Left ventricle myocardium superior (tissue), 1 donor: ENCODE measurements at regions of chr5 and their contacts with region 1.

Region 1: DNA sequence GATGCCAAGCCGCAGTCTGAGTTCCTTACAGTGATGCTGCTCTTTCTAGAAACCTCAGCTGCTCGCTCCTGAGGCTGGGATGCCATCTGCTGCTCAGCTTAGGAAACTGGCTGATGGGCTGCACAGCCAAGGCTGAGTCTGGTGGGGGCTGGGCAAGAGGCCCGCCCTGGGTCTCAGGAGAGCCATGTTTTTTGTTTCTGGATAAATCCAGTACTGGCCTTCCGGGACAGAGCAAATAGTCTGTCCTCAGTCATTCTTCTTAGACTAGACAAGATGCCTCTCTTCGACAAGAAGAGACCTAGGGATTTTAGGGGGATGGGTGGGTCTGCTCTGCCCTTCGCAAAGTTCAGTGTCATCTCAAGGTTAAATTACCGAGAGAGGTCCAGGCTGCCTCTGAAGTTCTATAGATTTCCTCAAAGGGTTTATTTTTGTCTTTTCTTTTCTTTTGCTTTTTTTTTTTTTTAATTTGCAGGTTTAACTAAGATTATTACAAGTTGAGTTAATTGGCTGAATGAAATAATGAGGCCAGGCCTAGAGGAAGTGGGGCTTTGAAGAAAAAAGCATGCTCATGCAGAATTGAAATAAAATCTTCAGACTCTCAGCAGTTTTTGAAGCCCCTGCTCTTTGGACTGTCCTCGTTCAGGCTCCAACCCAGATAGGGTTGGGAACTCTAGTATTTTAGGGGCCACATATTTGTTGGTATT is 30.6 kb upstream of the MATR3 start:
- DNase-seq: peak; percentile 91
- ATAC-seq: peak; percentile 99

Region 2: GRCh38 chr5:138230981-138231589 is 1031.8 kb before region 1 on chr5:
- intact Hi-C with region 1: no loop called
- DNase-seq: no peak
- ATAC-seq: peak; percentile 73

Region 3: GRCh38 chr5:138583984-138584637 is 678.8 kb before region 1 on chr5:
- intact Hi-C with region 1: loop called (anchors 5 kb)
- DNase-seq: no peak
- ATAC-seq: no peak

Region 4: DNA sequence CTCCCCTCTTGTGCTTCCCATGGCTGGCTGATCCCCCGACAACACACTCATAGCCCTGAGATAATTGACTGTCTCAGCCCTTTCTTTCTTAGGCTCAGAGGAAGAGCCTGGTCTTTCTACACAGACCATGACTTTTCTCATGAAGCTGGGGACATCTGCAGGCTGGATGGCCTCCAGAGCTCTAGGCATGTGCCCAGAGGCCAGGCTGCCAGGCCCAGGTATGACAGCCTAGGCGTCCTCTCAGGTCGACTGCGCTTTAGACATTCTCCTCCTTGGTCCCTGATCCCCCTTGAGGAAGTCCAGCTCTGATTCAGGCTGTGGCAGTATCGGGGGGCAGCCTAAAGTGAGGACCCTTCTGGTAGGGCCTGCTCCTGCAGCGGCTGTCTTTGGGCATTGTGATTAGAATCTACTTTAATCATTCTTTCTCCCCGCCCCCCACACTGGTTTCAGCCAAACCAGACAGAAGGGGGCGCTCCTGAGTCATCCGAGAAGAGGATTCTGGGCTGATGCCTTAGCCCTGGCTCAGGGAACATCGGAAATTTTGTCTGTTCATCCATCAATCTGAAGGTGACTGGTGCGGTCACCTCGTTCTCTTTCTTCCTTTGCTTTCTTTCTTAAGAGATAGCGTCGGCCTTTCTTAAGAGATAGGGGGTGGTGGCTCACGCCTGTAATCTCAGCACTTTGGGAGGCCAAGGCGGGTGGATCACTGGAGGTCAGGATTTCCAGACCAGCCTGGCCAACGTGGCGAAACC is 621.2 kb before region 1 on chr5:
- intact Hi-C with region 1: loop called (anchors 5 kb)
- DNase-seq: peak; percentile 75
- ATAC-seq: peak; percentile 77

Region 5: GRCh38 chr5:139061274-139061673 is 201.6 kb before region 1 on chr5:
- intact Hi-C with region 1: no loop called
- DNase-seq: peak; percentile 74
- ATAC-seq: peak; percentile 85